ENCODE measurements at regions of chr4 and their contacts with region 1.

Region 1: GRCh38 chr4:80072744-80073472 is at the start of gene ANTXR2:
- DNase-seq: peak; percentile 64
- H3K4me3 Mint-ChIP-seq: peak within 1 kb of the TSS; percentile 84
- H3K27ac Mint-ChIP-seq: peak within 1 kb of the TSS; percentile 82
- H3K4me1 Mint-ChIP-seq: peaks cover 76% of the 10 kb centered on the region
- H3K27me3 Mint-ChIP-seq: peaks cover 2% of the 10 kb centered on the region
- total RNA-seq, gene ANTXR2: 0.50 to 0.79 TPM

Region 2: DNA sequence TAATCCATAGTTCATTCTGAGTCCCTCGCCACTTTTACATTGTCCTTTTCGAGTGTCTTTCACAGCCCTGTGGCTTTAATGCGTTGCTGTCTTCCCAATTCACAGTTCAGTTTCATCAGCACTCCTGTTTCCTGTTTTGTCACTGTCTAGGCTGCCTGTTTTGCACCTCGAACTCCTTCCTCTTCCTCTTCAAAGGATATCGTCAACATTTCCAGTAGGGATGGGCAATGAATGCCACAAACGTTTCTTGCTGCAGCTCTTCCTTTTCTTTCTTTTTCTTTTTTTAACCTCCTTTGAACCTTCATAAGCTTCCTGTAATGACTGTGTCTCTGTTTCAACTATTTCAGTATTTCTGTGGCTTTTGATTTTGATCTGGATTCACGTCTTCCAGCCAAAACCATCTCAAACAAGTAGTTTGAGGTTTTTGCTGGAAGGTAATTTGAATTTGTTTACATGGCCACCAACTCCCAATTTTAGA is 1415.9 kb before region 1 on chr4:
- CTCF ChIA-PET with region 1: no interaction called
- intact Hi-C with region 1: loop called (anchors 10 kb)
- DNase-seq: peak; percentile 45
- H3K4me3 Mint-ChIP-seq: peak overlapping the region; percentile 32
- H3K27ac Mint-ChIP-seq: peak overlapping the region; percentile 84
- H3K4me1 Mint-ChIP-seq: peaks cover 45% of the 10 kb centered on the region
- H3K27me3 Mint-ChIP-seq: no peaks in the 10 kb centered on the region

Region 3: GRCh38 chr4:79528241-79528706 is 544.6 kb before region 1 on chr4:
- CTCF ChIA-PET with region 1: no interaction called
- intact Hi-C with region 1: loop called (anchors 1 kb)
- DNase-seq: peak; percentile 14
- H3K4me3 Mint-ChIP-seq: no peak overlapping the region
- H3K27ac Mint-ChIP-seq: no peak overlapping the region
- H3K4me1 Mint-ChIP-seq: peaks cover 11% of the 10 kb centered on the region
- H3K27me3 Mint-ChIP-seq: peaks cover 10% of the 10 kb centered on the region

Region 4: GRCh38 chr4:80007745-80008149 is 65.2 kb before region 1 on chr4:
- CTCF ChIA-PET with region 1: no interaction called
- intact Hi-C with region 1: loop called (anchors 1 kb)
- DNase-seq: no peak
- H3K4me3 Mint-ChIP-seq: no peak overlapping the region
- H3K27ac Mint-ChIP-seq: no peak overlapping the region
- H3K4me1 Mint-ChIP-seq: peaks cover 38% of the 10 kb centered on the region
- H3K27me3 Mint-ChIP-seq: no peaks in the 10 kb centered on the region

Region 5: DNA sequence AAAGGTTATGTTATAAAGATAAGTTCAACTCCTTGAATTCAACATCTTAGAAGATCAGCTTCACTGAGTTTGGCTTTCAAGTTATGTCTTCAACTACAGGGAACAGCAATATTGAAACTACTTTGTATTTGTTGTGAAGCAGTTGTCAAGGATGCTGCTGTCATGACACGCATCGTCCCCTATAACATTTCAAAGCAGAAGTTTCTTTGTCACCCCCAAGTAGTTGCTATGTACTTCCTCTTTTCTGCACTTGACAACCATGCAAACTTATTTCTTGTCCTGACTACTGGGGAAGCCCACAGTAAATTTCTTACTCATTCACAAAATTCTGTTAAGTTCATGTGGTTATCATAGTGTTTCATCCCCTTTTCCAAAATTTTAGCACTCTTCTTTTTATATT is 14.2 kb before region 1 on chr4:
- CTCF ChIA-PET with region 1: interaction called, 5 read pairs
- intact Hi-C with region 1: loop called (anchors 1 kb)
- DNase-seq: peak; percentile 67
- H3K4me3 Mint-ChIP-seq: peak overlapping the region; percentile 71
- H3K27ac Mint-ChIP-seq: peak overlapping the region; percentile 86
- H3K4me1 Mint-ChIP-seq: peaks cover 42% of the 10 kb centered on the region
- H3K27me3 Mint-ChIP-seq: no peaks in the 10 kb centered on the region

Region 6: GRCh38 chr4:80173401-80173800 is 100.5 kb after region 1 on chr4:
- CTCF ChIA-PET with region 1: interaction called, 3 read pairs
- intact Hi-C with region 1: loop called (anchors 1 kb)
- DNase-seq: peak; percentile 79
- H3K4me3 Mint-ChIP-seq: no peak overlapping the region
- H3K27ac Mint-ChIP-seq: peak overlapping the region; percentile 46
- H3K4me1 Mint-ChIP-seq: peaks cover 51% of the 10 kb centered on the region
- H3K27me3 Mint-ChIP-seq: no peaks in the 10 kb centered on the region

Region 7: DNA sequence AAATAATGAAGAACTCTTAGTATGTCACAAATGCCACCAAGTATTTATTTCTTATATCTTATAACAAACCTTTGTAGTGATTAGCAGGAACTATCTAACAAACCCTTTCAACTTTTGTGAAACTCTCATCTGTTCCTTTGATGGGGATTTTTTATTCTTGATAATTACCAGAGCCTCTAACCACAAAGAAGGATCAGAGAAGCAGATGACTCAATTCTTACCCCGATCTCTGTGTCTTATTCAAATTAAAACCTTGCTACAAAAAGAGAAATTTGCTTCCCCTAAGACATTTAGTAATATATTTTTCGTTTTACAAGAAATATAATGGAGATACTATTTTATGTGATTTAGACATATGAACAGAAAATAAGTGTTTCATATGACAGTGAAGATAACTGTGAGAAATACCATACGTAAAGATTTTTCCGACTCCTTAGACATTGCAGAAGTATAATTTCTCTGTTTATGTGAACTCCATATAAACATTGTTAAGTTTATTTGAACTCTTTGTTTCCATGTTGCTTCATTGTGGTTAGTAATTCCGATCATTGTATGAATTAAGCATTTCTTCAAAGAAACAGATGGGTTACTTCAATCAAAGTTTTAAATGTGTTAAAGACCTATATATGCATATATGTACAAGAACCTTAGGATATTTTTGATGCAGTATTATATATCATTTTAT is 468.0 kb after region 1 on chr4:
- CTCF ChIA-PET with region 1: no interaction called
- intact Hi-C with region 1: loop called (anchors 2 kb)
- DNase-seq: no peak
- H3K4me3 Mint-ChIP-seq: no peak overlapping the region
- H3K27ac Mint-ChIP-seq: peak overlapping the region; percentile 41
- H3K4me1 Mint-ChIP-seq: peaks cover 48% of the 10 kb centered on the region
- H3K27me3 Mint-ChIP-seq: peaks cover 34% of the 10 kb centered on the region